ENCODE measurements at regions of chr5 and their contacts with region 1.

Region 1: GRCh38 chr5:9851458-9851857 is 221.3 kb upstream of the TAS2R1 start:
- DNase-seq: peak; percentile 30
- H3K4me3 Mint-ChIP-seq: no peak overlapping the region
- H3K27ac Mint-ChIP-seq: no peak overlapping the region
- H3K4me1 Mint-ChIP-seq: no peaks in the 10 kb centered on the region
- H3K27me3 Mint-ChIP-seq: peaks cover 87% of the 10 kb centered on the region
- CTCF ChIP-seq: peak; percentile 22

Region 2: GRCh38 chr5:9905661-9906060 is 54.2 kb after region 1 on chr5:
- CTCF ChIA-PET with region 1: no interaction called
- intact Hi-C with region 1: no loop called
- DNase-seq: no peak
- H3K4me3 Mint-ChIP-seq: no peak overlapping the region
- H3K27ac Mint-ChIP-seq: no peak overlapping the region
- H3K4me1 Mint-ChIP-seq: no peaks in the 10 kb centered on the region
- H3K27me3 Mint-ChIP-seq: no peaks in the 10 kb centered on the region
- CTCF ChIP-seq: no peak

Region 3: GRCh38 chr5:10030210-10030831 is 178.9 kb after region 1 on chr5:
- CTCF ChIA-PET with region 1: interaction called, 6 read pairs
- intact Hi-C with region 1: loop called (anchors 1 kb)
- DNase-seq: peak; percentile 58
- H3K4me3 Mint-ChIP-seq: no peak overlapping the region
- H3K27ac Mint-ChIP-seq: no peak overlapping the region
- H3K4me1 Mint-ChIP-seq: no peaks in the 10 kb centered on the region
- H3K27me3 Mint-ChIP-seq: no peaks in the 10 kb centered on the region
- CTCF ChIP-seq: peak; percentile 14